SK-N-SH (cell line): ENCODE measurements at regions of chr7 and their contacts with region 1.

Region 1: DNA sequence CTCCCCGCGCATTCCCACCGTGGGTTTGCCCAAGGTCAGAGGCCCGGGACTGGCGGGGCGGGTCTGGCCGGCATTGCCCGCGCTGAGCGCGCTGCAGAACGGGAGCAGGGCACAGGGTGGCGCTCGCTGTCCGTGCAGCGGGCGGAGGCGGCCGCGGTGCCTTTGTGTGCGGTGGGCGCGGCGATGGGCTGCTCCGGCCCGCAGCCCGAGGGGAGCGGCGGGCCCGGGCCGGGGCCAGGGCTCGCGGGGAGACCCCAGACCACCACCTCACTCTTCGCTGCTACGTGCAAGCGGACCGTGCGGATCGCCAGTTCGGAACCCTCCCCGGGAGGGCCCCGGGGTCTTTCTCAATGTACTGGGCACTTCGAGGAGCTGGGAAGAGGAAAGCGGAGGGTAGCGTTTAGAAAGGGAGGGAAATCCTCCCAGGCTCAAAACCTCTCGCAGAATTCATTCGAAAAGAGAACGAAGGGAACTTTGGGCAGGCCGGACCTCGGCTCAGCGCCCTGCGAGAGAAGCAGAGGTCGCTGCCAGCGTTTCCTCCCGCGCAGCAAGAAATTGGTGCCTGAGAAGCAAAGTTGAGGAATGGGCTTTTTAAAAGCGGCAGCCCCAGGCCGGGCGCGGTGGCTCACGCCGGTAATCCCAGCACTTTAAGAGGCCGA is 8.5 kb downstream of the SP8 start:
- DNase-seq: peak; percentile 88
- H3K4me3 ChIP-seq: peak overlapping the region; percentile 24 to 43; a peak in 3 of 4 replicates
- H3K27ac ChIP-seq: no peak overlapping the region
- H3K4me1 ChIP-seq: no peaks in the 10 kb centered on the region; a peak in 1 of 4 replicates
- H3K27me3 ChIP-seq: peaks cover 82% of the 10 kb centered on the region
- CTCF ChIP-seq: peak; percentile 76
- EP300 ChIP-seq: no peak
- RAD21 ChIP-seq: peak; percentile 72

Region 2: GRCh38 chr7:21086688-21087087 is 308.5 kb after region 1 on chr7:
- CTCF ChIA-PET with region 1: no interaction called
- POLR2A ChIA-PET with region 1: no interaction called
- DNase-seq: no peak
- H3K4me3 ChIP-seq: no peak overlapping the region
- H3K27ac ChIP-seq: no peak overlapping the region
- H3K4me1 ChIP-seq: no peaks in the 10 kb centered on the region
- H3K27me3 ChIP-seq: no peaks in the 10 kb centered on the region
- CTCF ChIP-seq: no peak
- EP300 ChIP-seq: no peak
- RAD21 ChIP-seq: no peak

Region 3: DNA sequence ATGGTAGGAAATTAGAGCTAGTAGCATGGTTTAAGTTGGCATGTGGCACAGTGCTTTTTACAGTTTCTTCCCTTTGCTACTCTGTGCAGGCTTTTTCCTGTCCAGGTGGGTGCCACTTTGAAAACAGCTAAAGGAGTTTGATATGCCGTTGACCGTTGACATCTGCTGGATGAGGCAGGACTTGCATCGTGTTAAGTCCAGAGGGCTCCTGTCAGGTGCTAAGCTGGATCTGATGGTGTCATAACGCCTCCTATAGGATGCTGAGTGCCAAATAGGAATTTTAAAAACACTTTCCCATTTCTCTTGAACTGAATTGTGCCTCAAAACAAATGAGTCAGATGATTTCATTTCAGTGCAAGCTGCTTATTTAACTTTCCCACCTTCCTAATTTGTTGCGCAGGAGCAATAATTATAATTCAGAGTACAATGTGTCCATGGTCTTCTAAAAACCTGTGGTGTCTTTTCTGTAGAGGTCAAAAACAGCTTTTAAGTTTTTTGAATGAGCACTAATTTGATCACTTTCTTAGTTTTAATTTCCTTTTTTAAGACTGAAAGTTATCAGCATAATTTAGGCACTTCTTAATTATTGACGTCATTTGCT is 989.2 kb after region 1 on chr7:
- CTCF ChIA-PET with region 1: interaction called, 26 read pairs
- POLR2A ChIA-PET with region 1: no interaction called
- DNase-seq: peak; percentile 44
- H3K4me3 ChIP-seq: peak overlapping the region in 1 of 2 experiments; percentile 12; a peak in 1 of 4 replicates
- H3K27ac ChIP-seq: no peak overlapping the region
- H3K4me1 ChIP-seq: no peaks in the 10 kb centered on the region; a peak in 1 of 4 replicates
- H3K27me3 ChIP-seq: peaks cover 10% of the 10 kb centered on the region; the same call in 1 of the 2 replicates
- CTCF ChIP-seq: peak; percentile 71
- EP300 ChIP-seq: no peak
- RAD21 ChIP-seq: peak; percentile 79